ENCODE measurements at regions of chr15 and their contacts with region 1.

Region 1: DNA sequence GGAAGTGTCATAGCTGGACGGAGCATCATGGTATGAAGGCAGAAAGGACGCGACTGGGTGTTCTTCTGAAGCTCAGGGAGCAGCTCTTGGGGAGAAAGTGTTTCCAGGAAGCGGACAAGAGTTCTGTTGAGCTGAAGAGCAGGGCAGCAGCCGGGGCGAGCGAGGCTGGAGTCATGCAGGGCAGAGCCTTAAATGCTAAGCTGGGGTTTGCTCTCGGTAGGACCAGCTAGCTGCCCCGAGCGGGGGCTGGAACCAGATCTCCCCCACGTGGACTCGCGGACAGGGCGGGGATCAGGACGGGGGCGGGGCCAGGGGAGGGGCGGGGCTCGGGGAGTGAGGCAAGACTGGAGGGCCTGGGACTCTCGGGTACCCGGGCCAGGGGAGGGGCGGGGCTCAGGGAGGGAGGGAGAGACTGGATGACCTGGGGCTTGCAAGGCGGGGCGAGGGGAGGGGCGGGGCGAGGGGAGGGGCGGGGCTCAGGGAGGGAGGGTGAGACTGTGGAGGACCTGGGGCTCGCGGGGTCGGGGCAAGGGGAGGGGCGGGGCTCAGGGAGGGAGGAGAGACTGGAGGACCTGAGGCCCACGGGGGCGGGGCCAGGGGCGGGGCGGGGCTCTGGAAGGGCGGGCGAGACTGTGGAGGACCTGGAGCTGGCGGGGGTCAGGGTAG is 486 bp upstream of the FAH start:
- DNase-seq: peak; percentile 93 to 98 (median 96)
- ATAC-seq: peak; percentile 88 to 95 (median 92)
- H3K4me3 ChIP-seq: peak overlapping the region; percentile 41 to 95 (median 69)
- H3K27ac ChIP-seq: peak overlapping the region in 11 of 12 donors; percentile 54 to 86 (median 71)
- H3K4me1 ChIP-seq: peaks cover 0 to 38% (median 13%) of the 10 kb centered on the region in 12 donors
- H3K27me3 ChIP-seq: no peaks in the 10 kb centered on the region
- CTCF ChIP-seq: no peak
- POLR2A ChIP-seq: no peak

Region 2: DNA sequence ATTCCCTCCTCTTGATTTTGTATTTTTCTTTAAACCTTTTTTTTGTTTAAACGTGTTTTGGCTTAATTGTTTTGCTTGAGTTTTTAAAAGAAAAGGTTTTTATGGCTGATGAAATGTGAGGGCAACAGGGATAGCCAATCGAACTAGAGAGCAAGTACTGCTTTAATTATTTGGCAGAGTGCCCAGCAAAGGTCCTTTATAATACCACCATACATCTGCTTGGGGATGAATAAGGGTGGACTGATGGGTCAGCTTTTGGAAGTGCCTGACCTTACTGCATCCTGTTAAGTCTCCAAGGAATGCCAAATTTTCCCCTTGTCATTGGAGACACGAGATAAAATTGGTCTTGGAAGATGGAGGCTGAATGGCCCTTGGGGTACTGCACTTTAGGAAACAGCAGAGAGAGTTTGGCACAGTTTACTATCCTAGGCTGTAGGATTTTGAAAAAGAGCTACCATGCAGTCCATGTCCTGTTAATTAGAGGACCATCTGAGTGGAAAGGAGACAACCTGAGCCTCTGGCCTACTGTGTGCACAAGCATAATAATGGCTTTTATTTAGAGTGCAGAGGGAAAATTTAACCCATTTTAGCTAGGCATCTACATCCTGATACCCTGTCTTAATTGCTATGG is 235.7 kb before region 1 on chr15:
- intact Hi-C with region 1: loop called in 3 of 10 experiments (anchors 5 to 10 kb)
- DNase-seq: no peak
- ATAC-seq: no peak
- H3K4me3 ChIP-seq: no peak overlapping the region
- H3K27ac ChIP-seq: no peak overlapping the region
- H3K4me1 ChIP-seq: no peaks in the 10 kb centered on the region
- H3K27me3 ChIP-seq: no peaks in the 10 kb centered on the region
- CTCF ChIP-seq: no peak
- POLR2A ChIP-seq: no peak

Region 3: DNA sequence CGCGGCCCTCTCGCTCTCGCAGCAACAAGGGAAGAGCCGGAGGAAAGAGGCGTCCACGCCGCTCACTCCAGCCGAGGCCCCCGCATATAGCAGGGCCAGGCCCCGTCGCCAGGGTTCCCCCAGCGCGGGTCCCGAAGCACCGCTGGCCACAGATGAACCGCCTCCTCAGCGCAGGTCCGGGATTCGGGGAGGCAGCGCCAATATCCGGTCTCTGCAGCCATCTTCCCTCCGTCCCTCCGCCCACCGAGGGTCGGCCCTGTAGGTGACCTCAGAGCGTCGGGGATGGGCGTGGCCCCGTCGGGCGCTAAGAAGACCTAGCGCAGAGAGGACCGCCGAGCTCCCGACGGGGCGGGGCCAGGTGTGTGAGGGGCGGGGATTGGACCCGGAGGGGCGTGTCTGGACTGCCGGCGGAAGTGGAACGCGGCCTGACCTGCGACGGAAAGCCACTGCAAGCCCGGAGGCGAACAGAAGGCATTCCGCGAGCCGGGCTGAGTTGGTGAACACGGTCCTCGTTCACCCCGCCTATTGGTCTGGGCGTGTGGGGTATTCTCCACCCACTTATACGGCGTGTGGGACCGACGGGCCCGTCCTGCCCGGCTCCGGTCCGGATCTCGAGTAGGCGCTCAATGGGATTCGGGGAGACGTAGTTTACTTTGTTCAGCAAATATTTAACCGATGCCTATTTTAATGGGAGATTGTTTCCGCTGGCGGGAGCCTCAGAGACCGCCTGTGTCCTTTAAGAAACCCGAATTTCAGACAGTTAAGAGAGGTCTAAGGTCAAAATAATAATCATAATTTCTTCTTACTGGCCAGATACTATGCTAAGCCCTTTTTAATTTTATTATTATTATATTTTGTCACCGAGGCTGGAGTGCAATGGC is 228.6 kb before region 1 on chr15:
- intact Hi-C with region 1: loop called in 3 of 10 experiments (anchors 5 to 10 kb)
- DNase-seq: peak; percentile 93 to 97 (median 96)
- ATAC-seq: peak; percentile 99
- H3K4me3 ChIP-seq: peak overlapping the region; percentile 56 to 98 (median 85)
- H3K27ac ChIP-seq: peak overlapping the region; percentile 81 to 98 (median 94)
- H3K4me1 ChIP-seq: peaks cover 0 to 20% (median 5%) of the 10 kb centered on the region in 12 donors
- H3K27me3 ChIP-seq: no peaks in the 10 kb centered on the region
- CTCF ChIP-seq: no peak
- POLR2A ChIP-seq: peak; percentile 35 to 68

Region 4: GRCh38 chr15:80058851-80059785 is 93.2 kb before region 1 on chr15 and contains the start of gene ZFAND6:
- intact Hi-C with region 1: loop called in 8 of 10 experiments (anchors 2 to 10 kb)
- DNase-seq: peak; percentile 95 to 98 (median 96)
- ATAC-seq: peak; percentile 98 to 99 (median 98)
- H3K4me3 ChIP-seq: peak within 1 kb of the TSS; percentile 66 to 95 (median 92)
- H3K27ac ChIP-seq: peak within 1 kb of the TSS; percentile 88 to 96 (median 93)
- H3K4me1 ChIP-seq: peaks cover 0 to 39% (median 22%) of the 10 kb centered on the region in 12 donors
- H3K27me3 ChIP-seq: peaks cover 0 to 4% (median 0%) of the 10 kb centered on the region in 9 donors
- CTCF ChIP-seq: peak in 2 of 12 donors; percentile 5 to 15
- POLR2A ChIP-seq: peak; percentile 76 to 85
- total RNA-seq, gene ZFAND6: 67.4 to 105 (median 79.9) TPM

Region 5: DNA sequence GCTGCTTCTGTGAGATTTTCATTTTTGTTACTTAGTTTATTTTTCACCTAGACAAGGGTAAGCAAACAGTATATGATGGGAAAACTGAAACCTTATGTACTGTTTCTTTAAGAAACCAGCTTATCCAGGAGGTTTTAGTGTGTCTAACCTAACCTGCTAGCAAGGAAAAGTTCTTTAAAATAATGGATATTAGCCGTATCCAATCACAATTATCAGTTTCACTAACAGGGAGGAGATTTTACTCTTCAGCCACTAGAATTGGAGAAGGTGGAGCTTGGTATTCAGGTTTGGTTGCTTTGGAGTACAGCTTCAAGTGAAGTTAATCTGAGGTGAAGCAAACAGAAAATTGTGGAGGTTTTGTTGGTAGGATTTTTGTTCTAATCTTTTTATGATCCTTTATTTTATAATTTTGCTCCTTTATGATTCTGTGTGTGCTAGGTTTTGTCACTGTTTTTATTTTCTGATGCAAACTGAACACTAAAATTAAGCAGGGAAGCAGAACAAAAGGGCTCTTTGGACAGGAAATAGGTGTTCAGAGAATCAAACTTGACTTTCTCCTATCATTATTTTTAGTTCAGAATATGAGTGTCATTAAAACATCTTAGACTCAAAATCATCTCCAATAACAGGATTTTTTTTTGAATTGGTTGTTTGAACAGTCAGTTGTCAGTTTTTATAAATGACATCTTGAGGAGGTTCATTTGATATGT is 79.9 kb before region 1 on chr15:
- intact Hi-C with region 1: loop called in 4 of 10 experiments (anchors 5 to 10 kb)
- DNase-seq: peak in 2 of 5 donors; percentile 15 to 26
- ATAC-seq: peak; percentile 91 to 99 (median 98)
- H3K4me3 ChIP-seq: peak overlapping the region in 11 of 12 donors; percentile 5 to 60 (median 51)
- H3K27ac ChIP-seq: peak overlapping the region in 5 of 12 donors; percentile 34 to 61 (median 40)
- H3K4me1 ChIP-seq: peaks cover 0 to 72% (median 37%) of the 10 kb centered on the region in 12 donors
- H3K27me3 ChIP-seq: no peaks in the 10 kb centered on the region
- CTCF ChIP-seq: no peak
- POLR2A ChIP-seq: no peak

Region 6: GRCh38 chr15:80323285-80323684 is 171.0 kb after region 1 on chr15:
- intact Hi-C with region 1: no loop called
- DNase-seq: no peak
- ATAC-seq: no peak
- H3K4me3 ChIP-seq: no peak overlapping the region
- H3K27ac ChIP-seq: no peak overlapping the region
- H3K4me1 ChIP-seq: no peaks in the 10 kb centered on the region
- H3K27me3 ChIP-seq: no peaks in the 10 kb centered on the region
- CTCF ChIP-seq: no peak
- POLR2A ChIP-seq: no peak

Region 7: GRCh38 chr15:80507712-80508316 is 355.5 kb after region 1 on chr15:
- intact Hi-C with region 1: no loop called
- DNase-seq: no peak
- ATAC-seq: peak in 2 of 4 donors; percentile 29 to 47
- H3K4me3 ChIP-seq: no peak overlapping the region
- H3K27ac ChIP-seq: peak overlapping the region in 1 of 12 donors; percentile 17
- H3K4me1 ChIP-seq: peaks cover 0 to 18% (median 4%) of the 10 kb centered on the region in 12 donors
- H3K27me3 ChIP-seq: no peaks in the 10 kb centered on the region
- CTCF ChIP-seq: no peak
- POLR2A ChIP-seq: no peak